ENCODE measurements at regions of chr5 and their contacts with region 1.

Region 1: DNA sequence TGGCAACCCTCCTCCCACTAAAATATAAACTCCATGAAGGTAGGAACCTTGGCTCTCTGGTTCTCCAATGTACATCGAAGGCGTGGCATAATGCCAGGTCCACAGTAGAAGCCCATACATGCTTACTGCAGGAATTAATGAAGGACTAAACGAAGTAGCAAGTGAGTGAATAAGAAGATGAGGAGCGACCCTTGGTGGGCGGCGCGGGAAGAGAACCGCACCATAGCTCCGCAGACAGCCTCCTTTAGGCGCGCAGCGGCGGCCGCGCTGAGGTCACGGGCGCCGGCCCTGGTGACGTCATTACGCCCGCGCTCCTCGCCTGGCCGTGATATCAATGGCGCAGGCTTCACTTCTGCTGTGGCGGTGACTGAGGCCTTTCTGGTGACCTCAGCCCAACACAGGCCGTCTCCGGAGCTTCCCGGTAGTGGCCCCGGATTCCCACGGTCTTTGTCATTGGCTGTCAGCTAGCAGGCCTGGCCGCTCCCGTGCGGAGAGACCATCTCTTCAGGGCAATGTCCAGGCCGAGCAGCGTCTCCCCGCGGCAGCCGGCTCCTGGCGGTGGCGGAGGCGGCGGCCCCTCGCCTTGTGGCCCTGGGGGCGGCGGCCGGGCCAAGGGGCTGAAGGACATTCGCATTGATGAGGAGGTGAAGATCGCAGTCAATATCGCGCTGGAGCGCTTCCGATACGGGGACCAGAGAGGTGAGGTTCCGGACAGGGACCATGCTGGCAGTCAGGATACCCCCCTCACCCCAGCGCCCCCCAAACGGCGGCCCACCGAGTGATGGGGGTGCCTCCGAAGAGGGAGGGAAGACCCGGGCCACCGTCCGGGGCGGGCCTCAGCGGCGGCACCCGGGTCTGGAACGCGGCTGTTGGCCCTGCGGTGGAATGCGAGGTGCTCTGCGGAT is at the start of gene YTHDC2:
- DNase-seq: peak; percentile 94
- ATAC-seq: peak; percentile 99
- total RNA-seq, gene YTHDC2: 13.4 TPM

Region 2: GRCh38 chr5:113336975-113337374 is 176.7 kb before region 1 on chr5:
- intact Hi-C with region 1: loop called (anchors 5 kb)
- DNase-seq: peak; percentile 31
- ATAC-seq: peak; percentile 90

Region 3: GRCh38 chr5:113378959-113379541 is 134.6 kb before region 1 on chr5:
- intact Hi-C with region 1: loop called (anchors 2 kb)
- DNase-seq: peak; percentile 38
- ATAC-seq: peak; percentile 52

Region 4: GRCh38 chr5:113824307-113824706 is 310.7 kb after region 1 on chr5:
- intact Hi-C with region 1: no loop called
- DNase-seq: no peak
- ATAC-seq: no peak

Measured in left ventricle myocardium superior (tissue), 1 donor.